Ascending aorta (tissue), 2 donors: ENCODE measurements at regions of chr5 and their contacts with region 1.

Region 1: GRCh38 chr5:60586307-60586901 is 113.6 kb downstream of the DEPDC1B start:
- DNase-seq: no peak
- H3K4me3 ChIP-seq: no peak overlapping the region
- H3K27ac ChIP-seq: no peak overlapping the region
- H3K4me1 ChIP-seq: no peaks in the 10 kb centered on the region
- H3K27me3 ChIP-seq: no peaks in the 10 kb centered on the region
- CTCF ChIP-seq: peak; percentile 6 to 57 (median 54)

Region 2: GRCh38 chr5:60295423-60295822 is 291.0 kb before region 1 on chr5:
- intact Hi-C with region 1: loop called (anchors 10 kb)
- DNase-seq: no peak
- H3K4me3 ChIP-seq: no peak overlapping the region
- H3K27ac ChIP-seq: no peak overlapping the region
- H3K4me1 ChIP-seq: no peaks in the 10 kb centered on the region
- H3K27me3 ChIP-seq: no peaks in the 10 kb centered on the region
- CTCF ChIP-seq: peak in 2 of 3 experiments; percentile 32 to 48